Activated CD4-positive, alpha-beta T cell treated with anti-CD3 and anti-CD28 coated beads, Interleukin-2, amount 10 ng/mL, durations not matched to agents 7 days and 5 days (primary cell): ENCODE measurements at regions of chr18 and their contacts with region 1.

Region 1: GRCh38 chr18:76709659-76710645 is 112.4 kb upstream of the ZNF236 start:
- DNase-seq: peak; percentile 70
- H3K4me3 Mint-ChIP-seq: no peak overlapping the region
- H3K27ac Mint-ChIP-seq: peak overlapping the region; percentile 46
- H3K4me1 Mint-ChIP-seq: peaks cover 13% of the 10 kb centered on the region
- H3K27me3 Mint-ChIP-seq: peaks cover 6% of the 10 kb centered on the region

Region 2: GRCh38 chr18:75863696-75864095 is 846.3 kb before region 1 on chr18:
- CTCF ChIA-PET with region 1: no interaction called
- POLR2A ChIA-PET with region 1: no interaction called
- DNase-seq: no peak
- H3K4me3 Mint-ChIP-seq: no peak overlapping the region
- H3K27ac Mint-ChIP-seq: no peak overlapping the region
- H3K4me1 Mint-ChIP-seq: no peaks in the 10 kb centered on the region
- H3K27me3 Mint-ChIP-seq: peaks cover 3% of the 10 kb centered on the region

Region 3: GRCh38 chr18:76398896-76399612 is 310.9 kb before region 1 on chr18:
- CTCF ChIA-PET with region 1: interaction called, 13 read pairs
- POLR2A ChIA-PET with region 1: no interaction called
- DNase-seq: peak; percentile 76
- H3K4me3 Mint-ChIP-seq: no peak overlapping the region
- H3K27ac Mint-ChIP-seq: no peak overlapping the region
- H3K4me1 Mint-ChIP-seq: peaks cover 6% of the 10 kb centered on the region
- H3K27me3 Mint-ChIP-seq: peaks cover 6% of the 10 kb centered on the region

Region 4: GRCh38 chr18:76684265-76684664 is 25.7 kb before region 1 on chr18:
- CTCF ChIA-PET with region 1: no interaction called
- POLR2A ChIA-PET with region 1: no interaction called
- DNase-seq: no peak
- H3K4me3 Mint-ChIP-seq: no peak overlapping the region
- H3K27ac Mint-ChIP-seq: no peak overlapping the region
- H3K4me1 Mint-ChIP-seq: peaks cover 8% of the 10 kb centered on the region
- H3K27me3 Mint-ChIP-seq: peaks cover 5% of the 10 kb centered on the region

Region 5: GRCh38 chr18:76721207-76721996 is 11.4 kb after region 1 on chr18:
- CTCF ChIA-PET with region 1: interaction called, 12 read pairs
- POLR2A ChIA-PET with region 1: no interaction called
- DNase-seq: peak; percentile 92
- H3K4me3 Mint-ChIP-seq: peak overlapping the region; percentile 70
- H3K27ac Mint-ChIP-seq: peak overlapping the region; percentile 91
- H3K4me1 Mint-ChIP-seq: peaks cover 57% of the 10 kb centered on the region
- H3K27me3 Mint-ChIP-seq: peaks cover 10% of the 10 kb centered on the region